MCF 10A (cell line): ENCODE measurements at regions of chr3 and their contacts with region 1.

Region 1: DNA sequence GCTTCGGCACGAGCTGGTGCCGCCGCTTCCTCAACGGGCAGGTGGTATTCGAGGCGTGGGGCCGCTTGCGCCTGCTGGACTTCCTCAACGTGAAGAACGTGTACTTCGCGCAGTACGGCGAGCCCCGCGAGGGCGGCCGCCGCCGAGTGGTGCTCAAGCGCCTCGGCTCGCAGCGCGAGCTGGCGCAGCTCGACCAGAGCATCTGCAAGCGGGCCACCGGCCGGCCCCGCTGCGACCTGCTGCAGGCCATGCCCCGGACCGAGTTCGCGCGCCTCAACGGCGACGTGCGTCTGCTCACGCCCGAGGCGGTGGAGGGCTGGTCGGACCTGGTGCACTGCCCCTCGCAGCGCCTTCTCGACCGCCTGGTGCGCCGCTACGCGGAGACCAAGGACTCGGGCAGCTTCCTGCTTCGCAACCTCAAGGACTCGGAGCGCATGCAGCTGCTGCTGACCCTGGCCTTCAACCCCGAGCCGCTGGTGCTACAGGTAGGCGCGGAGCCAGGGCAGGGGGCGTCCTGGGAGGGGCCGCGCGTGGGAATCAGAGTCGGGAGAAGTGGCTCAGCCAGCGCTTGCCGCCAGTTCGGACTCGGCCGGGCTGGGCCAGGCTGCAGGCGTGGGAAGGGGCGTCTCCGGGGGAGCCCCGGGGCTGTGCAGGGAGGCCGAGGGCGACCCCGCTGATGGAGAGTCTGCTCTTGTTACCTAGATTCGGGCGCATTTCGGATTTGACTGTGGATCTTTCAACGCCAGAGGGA is 1.1 kb downstream of the DIPK2A start:
- DNase-seq: peak; percentile 89
- H3K4me3 Mint-ChIP-seq: peak overlapping the region; percentile 93
- H3K27ac Mint-ChIP-seq: peak overlapping the region; percentile 98
- H3K4me1 Mint-ChIP-seq: peaks cover 14% of the 10 kb centered on the region
- H3K27me3 Mint-ChIP-seq: no peaks in the 10 kb centered on the region
- CTCF ChIP-seq: peak; percentile 46

Region 2: DNA sequence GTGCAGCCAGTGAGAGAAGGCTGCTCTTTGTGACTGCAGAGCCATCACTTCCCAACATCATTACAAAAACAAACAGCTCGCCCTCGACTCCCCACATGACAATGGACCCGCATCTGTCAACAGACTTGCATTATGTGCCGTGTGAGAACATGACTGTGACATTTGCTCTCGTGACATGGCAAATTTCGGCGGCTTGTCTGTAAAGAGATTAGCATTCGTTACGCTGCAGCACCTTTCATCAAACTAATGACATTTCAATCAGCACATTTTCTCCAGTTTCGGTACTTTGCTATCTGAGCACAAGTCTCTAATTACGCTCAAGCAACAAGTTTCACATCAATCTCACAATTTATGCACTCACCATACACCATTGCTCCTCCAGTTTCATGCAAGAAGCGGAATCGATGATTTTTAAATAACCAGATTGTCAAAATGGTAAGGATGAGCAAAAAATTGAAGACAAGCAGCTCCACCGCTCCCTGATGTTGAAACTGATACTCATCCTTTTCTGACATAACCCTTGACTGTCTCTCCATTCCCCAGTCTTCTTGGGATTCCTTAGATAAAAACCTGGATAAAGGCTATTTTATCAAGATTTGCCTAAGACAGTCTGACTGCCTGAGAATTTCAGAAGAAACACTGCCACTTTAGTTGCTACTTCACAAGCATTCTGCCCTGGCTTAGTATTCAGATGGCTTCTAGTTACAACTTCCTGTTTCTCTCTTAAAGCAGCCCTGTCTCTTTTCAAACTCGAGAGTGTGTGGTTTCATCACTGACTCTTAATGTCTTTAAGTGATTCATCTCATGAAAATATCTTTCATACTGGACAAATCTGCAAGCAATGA is 124.7 kb before region 1 on chr3 and contains the start of gene SLC9A9:
- CTCF ChIA-PET with region 1: interaction called, 6 read pairs
- POLR2A ChIA-PET with region 1: interaction called, 58 read pairs
- intact Hi-C with region 1: no loop called
- DNase-seq: peak; percentile 78
- H3K4me3 Mint-ChIP-seq: peak within 1 kb of the TSS; percentile 97
- H3K27ac Mint-ChIP-seq: peak within 1 kb of the TSS; percentile 91
- H3K4me1 Mint-ChIP-seq: peaks cover 49% of the 10 kb centered on the region
- H3K27me3 Mint-ChIP-seq: no peaks in the 10 kb centered on the region
- CTCF ChIP-seq: no peak
- total RNA-seq, gene SLC9A9: 2.0 and 2.2 TPM in 2 replicates

Region 3: DNA sequence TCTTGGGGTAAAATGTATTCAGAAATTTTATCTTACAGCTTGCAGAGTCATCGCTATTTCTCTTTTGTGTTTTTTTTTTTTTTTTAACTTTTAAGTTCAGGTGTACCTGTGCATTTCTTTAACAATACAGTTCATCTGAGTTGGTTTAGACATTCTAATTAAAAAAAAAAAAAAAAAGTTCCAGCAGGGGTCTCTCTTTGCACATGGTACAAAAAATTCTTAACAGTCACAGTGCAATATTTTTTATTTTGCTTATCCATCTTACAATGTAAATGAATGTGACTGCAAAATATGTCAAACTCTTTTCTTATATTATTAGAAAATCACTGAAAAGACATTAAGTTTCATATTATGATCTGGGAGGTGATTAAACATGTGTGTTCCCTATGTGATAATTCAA is 76.9 kb before region 1 on chr3:
- CTCF ChIA-PET with region 1: interaction called, 11 read pairs
- POLR2A ChIA-PET with region 1: interaction called, 29 read pairs
- intact Hi-C with region 1: loop called (anchors 2 kb)
- DNase-seq: peak; percentile 26
- H3K4me3 Mint-ChIP-seq: no peak overlapping the region
- H3K27ac Mint-ChIP-seq: no peak overlapping the region
- H3K4me1 Mint-ChIP-seq: peaks cover 7% of the 10 kb centered on the region
- H3K27me3 Mint-ChIP-seq: no peaks in the 10 kb centered on the region
- CTCF ChIP-seq: no peak

Region 4: DNA sequence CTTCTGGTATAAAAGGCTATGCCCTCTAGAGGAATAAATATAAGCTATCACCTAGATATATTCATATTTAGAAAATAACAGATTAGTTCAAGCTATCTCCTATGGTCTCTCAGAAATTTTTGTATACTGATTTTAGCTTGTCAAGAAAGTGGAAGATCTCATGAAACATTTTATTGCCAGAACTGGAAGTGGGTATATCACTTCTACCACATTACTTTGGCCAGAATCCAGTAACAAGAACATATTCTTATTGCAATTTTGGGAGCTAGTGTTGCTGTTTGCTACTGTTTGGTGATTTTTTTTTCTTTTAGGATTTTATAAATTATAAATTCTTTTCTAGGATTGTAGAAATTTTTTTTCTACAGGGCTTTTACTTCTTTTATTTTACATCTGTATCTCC is 15.2 kb before region 1 on chr3:
- CTCF ChIA-PET with region 1: interaction called, 12 read pairs
- POLR2A ChIA-PET with region 1: interaction called, 11 read pairs
- intact Hi-C with region 1: no loop called
- DNase-seq: no peak
- H3K4me3 Mint-ChIP-seq: no peak overlapping the region
- H3K27ac Mint-ChIP-seq: no peak overlapping the region
- H3K4me1 Mint-ChIP-seq: no peaks in the 10 kb centered on the region
- H3K27me3 Mint-ChIP-seq: no peaks in the 10 kb centered on the region
- CTCF ChIP-seq: no peak

Region 5: GRCh38 chr3:144341471-144341870 is 368.8 kb after region 1 on chr3:
- CTCF ChIA-PET with region 1: no interaction called
- POLR2A ChIA-PET with region 1: no interaction called
- intact Hi-C with region 1: loop called (anchors 10 kb)
- DNase-seq: no peak
- H3K4me3 Mint-ChIP-seq: no peak overlapping the region
- H3K27ac Mint-ChIP-seq: no peak overlapping the region
- H3K4me1 Mint-ChIP-seq: no peaks in the 10 kb centered on the region
- H3K27me3 Mint-ChIP-seq: peaks cover 9% of the 10 kb centered on the region
- CTCF ChIP-seq: no peak

Region 6: GRCh38 chr3:144622845-144623244 is 650.2 kb after region 1 on chr3:
- CTCF ChIA-PET with region 1: no interaction called
- POLR2A ChIA-PET with region 1: no interaction called
- intact Hi-C with region 1: loop called (anchors 10 kb)
- DNase-seq: no peak
- H3K4me3 Mint-ChIP-seq: no peak overlapping the region
- H3K27ac Mint-ChIP-seq: no peak overlapping the region
- H3K4me1 Mint-ChIP-seq: no peaks in the 10 kb centered on the region
- H3K27me3 Mint-ChIP-seq: peaks cover 1% of the 10 kb centered on the region
- CTCF ChIP-seq: no peak

Region 7: GRCh38 chr3:145767909-145768308 is 1795.2 kb after region 1 on chr3:
- CTCF ChIA-PET with region 1: interaction called, 6 read pairs
- POLR2A ChIA-PET with region 1: interaction called, 5 read pairs
- intact Hi-C with region 1: loop called (anchors 2 kb)
- DNase-seq: no peak
- H3K4me3 Mint-ChIP-seq: no peak overlapping the region
- H3K27ac Mint-ChIP-seq: no peak overlapping the region
- H3K4me1 Mint-ChIP-seq: no peaks in the 10 kb centered on the region
- H3K27me3 Mint-ChIP-seq: peaks cover 39% of the 10 kb centered on the region
- CTCF ChIP-seq: peak; percentile 24